PC-9 (cell line): ENCODE measurements at regions of chr7 and their contacts with region 1.

Region 1: GRCh38 chr7:140003913-140004382 is 58.8 kb downstream of the PARP12 start:
- DNase-seq: peak in 1 of 2 experiments; percentile 25
- H3K4me3 ChIP-seq: no peak overlapping the region
- H3K27ac ChIP-seq: no peak overlapping the region
- H3K4me1 ChIP-seq: no peaks in the 10 kb centered on the region
- H3K27me3 ChIP-seq: no peaks in the 10 kb centered on the region
- CTCF ChIP-seq: peak; percentile 84

Region 2: GRCh38 chr7:139431010-139431409 is 572.9 kb before region 1 on chr7:
- CTCF ChIA-PET with region 1: no interaction called
- POLR2A ChIA-PET with region 1: no interaction called
- intact Hi-C with region 1: loop called (anchors 10 kb)
- DNase-seq: peak; percentile 80 to 93
- H3K4me3 ChIP-seq: no peak overlapping the region
- H3K27ac ChIP-seq: peak overlapping the region; percentile 48
- H3K4me1 ChIP-seq: peaks cover 28% of the 10 kb centered on the region
- H3K27me3 ChIP-seq: no peaks in the 10 kb centered on the region
- CTCF ChIP-seq: no peak

Region 3: GRCh38 chr7:139602143-139602722 is 401.7 kb before region 1 on chr7:
- CTCF ChIA-PET with region 1: interaction called, 3 read pairs
- POLR2A ChIA-PET with region 1: no interaction called
- intact Hi-C with region 1: loop called (anchors 1 kb)
- DNase-seq: no peak
- H3K4me3 ChIP-seq: no peak overlapping the region
- H3K27ac ChIP-seq: no peak overlapping the region
- H3K4me1 ChIP-seq: peaks cover 15% of the 10 kb centered on the region
- H3K27me3 ChIP-seq: no peaks in the 10 kb centered on the region
- CTCF ChIP-seq: peak; percentile 64

Region 4: DNA sequence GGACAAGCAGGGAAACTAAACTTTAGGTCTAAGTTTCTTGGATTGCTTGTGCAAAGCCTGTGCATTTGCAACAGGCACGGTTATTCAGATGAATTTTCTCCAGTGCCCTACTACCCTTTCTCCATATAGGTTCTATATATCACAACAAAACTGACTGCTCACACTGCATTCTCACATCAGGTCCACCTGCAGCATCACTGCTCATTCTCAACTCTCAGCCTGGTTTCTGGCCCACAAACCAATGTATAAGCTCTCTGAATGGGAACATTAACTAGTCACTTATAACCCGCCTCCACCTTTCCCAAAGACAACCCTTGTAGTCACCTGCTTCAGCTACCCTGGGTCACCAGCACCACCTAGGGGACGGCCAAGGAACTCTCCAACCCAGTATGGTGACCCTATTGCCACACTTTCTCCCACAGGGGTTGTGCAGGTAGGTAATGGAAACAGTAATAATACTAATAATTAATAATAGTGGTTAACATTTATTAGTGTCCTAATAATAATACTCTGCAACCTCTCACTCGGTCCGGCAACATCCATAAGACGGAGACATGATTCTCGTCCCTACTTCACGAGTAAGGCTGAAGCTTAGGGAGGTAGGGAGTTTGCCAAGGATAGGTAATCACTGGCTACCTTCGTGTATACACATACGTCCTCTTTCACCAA is 383.1 kb before region 1 on chr7:
- CTCF ChIA-PET with region 1: interaction called, 11 read pairs
- POLR2A ChIA-PET with region 1: no interaction called
- intact Hi-C with region 1: loop called (anchors 1 kb)
- DNase-seq: peak; percentile 55 to 65
- H3K4me3 ChIP-seq: no peak overlapping the region
- H3K27ac ChIP-seq: no peak overlapping the region
- H3K4me1 ChIP-seq: no peaks in the 10 kb centered on the region
- H3K27me3 ChIP-seq: no peaks in the 10 kb centered on the region
- CTCF ChIP-seq: peak; percentile 89

Region 5: DNA sequence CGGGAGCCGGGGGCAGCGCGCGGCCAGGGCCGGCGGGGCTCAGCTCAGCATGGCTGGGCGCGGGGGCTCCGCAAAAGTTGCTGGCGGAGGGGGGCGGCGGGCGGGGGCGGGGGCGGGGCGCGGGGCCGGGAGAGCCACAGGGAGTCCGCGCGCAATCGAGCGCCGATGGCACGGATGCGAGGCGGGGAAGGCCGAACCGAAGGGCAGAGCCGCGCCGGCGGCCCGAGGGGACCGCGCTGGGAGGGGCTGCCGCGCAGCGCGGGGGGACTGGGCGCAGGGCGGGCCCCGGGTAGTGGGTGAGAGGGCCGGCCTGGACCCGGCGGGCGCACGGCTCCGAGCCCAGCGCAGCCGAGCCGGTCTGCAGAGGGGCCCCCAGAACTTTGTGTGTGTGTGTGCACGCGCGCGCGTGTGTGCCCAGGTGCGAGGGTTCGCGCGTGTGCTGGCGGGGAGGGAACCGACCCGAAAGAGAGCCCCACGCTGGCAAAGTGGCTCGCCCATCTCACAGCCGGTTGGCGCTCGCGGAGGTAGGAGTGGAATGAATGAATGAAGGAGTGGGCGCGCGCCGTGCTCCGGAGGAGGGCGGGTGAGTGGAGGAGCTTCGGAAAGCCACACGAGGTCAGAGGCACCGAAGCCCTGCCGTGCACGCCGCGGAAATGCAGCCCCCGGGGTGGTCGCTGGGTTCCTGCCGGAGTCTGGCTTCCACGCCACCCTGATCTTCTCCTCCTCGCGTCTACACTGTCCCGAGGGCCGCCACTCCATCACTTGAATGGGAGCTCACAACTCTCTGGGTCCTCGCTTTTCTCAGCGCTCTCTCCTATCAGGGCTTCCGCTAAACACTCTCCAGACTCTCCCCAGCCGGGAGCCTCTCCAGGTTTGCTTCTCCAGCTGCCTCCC is 225.8 kb before region 1 on chr7 and contains the start of gene HIPK2:
- CTCF ChIA-PET with region 1: no interaction called
- POLR2A ChIA-PET with region 1: no interaction called
- intact Hi-C with region 1: loop called (anchors 1 kb)
- DNase-seq: peak in 1 of 2 experiments; percentile 64
- H3K4me3 ChIP-seq: peak within 1 kb of the TSS; percentile 90
- H3K27ac ChIP-seq: peak within 1 kb of the TSS; percentile 45
- H3K4me1 ChIP-seq: peaks cover 39% of the 10 kb centered on the region
- H3K27me3 ChIP-seq: no peaks in the 10 kb centered on the region
- CTCF ChIP-seq: no peak
- total RNA-seq, gene HIPK2: 23.9 and 35.2 TPM in 2 replicates

Region 6: GRCh38 chr7:140121326-140121725 is 117.4 kb after region 1 on chr7:
- CTCF ChIA-PET with region 1: no interaction called
- POLR2A ChIA-PET with region 1: no interaction called
- intact Hi-C with region 1: no loop called
- DNase-seq: no peak
- H3K4me3 ChIP-seq: no peak overlapping the region
- H3K27ac ChIP-seq: no peak overlapping the region
- H3K4me1 ChIP-seq: no peaks in the 10 kb centered on the region
- H3K27me3 ChIP-seq: no peaks in the 10 kb centered on the region
- CTCF ChIP-seq: no peak

Region 7: DNA sequence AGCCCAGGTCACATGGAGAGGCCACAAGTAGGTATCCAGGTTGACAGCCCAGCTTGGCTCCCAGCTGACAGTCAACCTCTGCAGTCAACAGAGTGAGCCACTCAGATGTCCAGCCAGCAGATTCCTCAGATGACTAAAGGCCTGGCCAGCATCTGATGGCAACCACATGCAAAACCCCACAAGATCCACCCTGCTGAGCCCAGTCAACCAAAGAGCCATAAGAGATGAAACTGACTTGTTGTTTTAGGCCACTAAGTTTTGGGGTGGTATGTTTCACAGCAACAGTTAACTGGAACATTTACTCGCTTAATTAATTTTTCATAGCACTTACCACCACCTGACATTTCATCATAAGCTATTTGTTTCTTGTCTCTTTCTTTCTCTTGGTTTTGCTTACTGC is 280.1 kb after region 1 on chr7:
- CTCF ChIA-PET with region 1: no interaction called
- POLR2A ChIA-PET with region 1: no interaction called
- intact Hi-C with region 1: no loop called
- DNase-seq: no peak
- H3K4me3 ChIP-seq: no peak overlapping the region
- H3K27ac ChIP-seq: no peak overlapping the region
- H3K4me1 ChIP-seq: no peaks in the 10 kb centered on the region
- H3K27me3 ChIP-seq: peaks cover 22% of the 10 kb centered on the region; the same call in 1 of the 2 replicates
- CTCF ChIP-seq: no peak

Region 8: GRCh38 chr7:140326116-140326928 is 322.4 kb after region 1 on chr7:
- CTCF ChIA-PET with region 1: interaction called, 3 read pairs
- POLR2A ChIA-PET with region 1: no interaction called
- intact Hi-C with region 1: loop called (anchors 2 kb)
- DNase-seq: peak in 1 of 2 experiments; percentile 67
- H3K4me3 ChIP-seq: no peak overlapping the region
- H3K27ac ChIP-seq: no peak overlapping the region
- H3K4me1 ChIP-seq: no peaks in the 10 kb centered on the region
- H3K27me3 ChIP-seq: no peaks in the 10 kb centered on the region
- CTCF ChIP-seq: peak; percentile 78